Panc1 (cell line): ENCODE measurements at regions of chr5 and their contacts with region 1.

Region 1: DNA sequence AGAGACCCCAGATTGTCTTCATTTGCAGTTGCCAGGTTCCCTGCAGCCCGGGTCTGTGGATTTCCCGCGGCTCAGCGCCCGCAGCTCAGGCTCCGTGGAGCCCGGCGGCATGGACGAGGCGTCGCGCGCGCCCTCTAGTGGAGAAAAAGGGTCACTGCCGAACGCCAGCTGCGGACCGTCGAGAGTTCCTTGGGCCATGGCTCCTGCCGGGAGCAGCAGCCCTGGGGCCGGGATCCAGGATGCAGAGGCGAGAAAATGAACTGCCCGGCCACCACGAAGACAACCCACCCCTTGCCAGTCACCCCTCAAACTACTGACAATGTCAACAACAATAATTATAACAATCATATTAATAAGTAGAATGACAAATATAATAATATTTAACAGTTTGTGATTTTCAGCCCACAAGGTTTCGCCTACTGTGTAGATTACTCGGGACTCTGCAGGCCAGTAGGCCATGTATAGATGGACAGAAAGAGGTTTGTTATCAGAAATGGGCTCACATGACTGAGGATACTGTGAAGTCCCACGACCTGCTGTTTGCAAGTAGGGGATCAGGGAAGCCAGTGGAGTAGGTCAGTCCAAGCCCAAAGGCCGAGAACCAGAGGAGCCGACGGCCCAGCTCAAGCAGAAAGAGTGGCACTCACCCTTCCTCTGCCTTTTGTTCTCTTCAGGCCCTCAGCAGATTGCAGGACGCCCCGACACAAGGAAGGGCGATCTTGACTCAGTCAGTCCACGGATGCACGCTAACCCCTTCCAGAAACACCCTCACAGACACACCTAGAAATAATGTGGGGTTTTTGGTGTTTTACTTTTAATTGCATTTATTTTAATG is 43.1 kb downstream of the BOD1 start:
- DNase-seq: no peak
- ATAC-seq: peak; percentile 97
- H3K4me3 ChIP-seq: peak overlapping the region in 1 of 2 experiments; percentile 51; a peak in 2 of 4 replicates
- H3K27ac ChIP-seq: no peak overlapping the region
- H3K4me1 ChIP-seq: no peaks in the 10 kb centered on the region
- H3K27me3 ChIP-seq: no peaks in the 10 kb centered on the region
- CTCF ChIP-seq: peak; percentile 98

Region 2: DNA sequence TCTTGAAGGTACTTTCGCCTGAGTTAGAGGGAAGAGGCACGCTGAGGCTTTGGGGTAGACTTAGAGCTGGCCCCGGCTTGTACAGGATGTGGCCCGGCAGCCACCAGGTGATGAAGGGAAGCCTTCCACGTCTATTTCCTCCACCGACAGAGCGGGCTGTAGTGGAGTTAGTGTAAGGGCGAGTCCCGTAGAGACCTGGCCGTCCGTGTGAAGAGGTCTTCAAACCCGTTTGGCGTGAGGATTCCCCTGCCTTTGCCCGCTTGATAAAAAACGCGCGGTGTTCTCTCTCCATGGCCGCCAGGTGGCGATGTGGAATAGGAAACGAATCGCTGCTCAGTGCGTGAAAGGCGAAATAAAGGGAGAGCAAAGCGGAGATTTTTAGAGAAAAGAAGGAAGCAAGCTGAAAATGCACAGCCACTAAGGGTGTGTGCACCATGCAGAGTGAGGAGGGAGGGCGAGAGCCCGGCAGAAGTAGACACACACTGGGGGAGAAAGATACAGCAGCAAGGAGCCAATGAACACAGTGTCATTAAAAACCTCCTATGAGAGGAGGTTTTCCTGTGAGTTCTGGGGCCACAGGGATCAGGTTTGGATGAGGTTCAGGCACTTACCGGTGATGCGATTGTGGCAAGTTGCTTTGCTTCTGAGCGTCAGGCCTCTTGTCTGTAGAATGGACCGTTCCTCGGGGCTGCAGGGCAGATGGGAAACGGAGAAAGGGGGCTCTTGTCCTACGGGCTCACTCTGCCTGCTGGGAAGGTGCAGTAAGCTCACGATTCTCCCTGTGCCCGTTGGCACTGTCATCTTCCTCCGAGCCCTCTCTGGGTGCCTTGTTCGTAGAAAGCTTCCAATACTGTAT is 279.3 kb before region 1 on chr5:
- CTCF ChIA-PET with region 1: interaction called, 6 read pairs
- POLR2A ChIA-PET with region 1: no interaction called
- in situ Hi-C with region 1: no loop called
- intact Hi-C with region 1: loop called (anchors 2 kb)
- DNase-seq: no peak
- ATAC-seq: peak; percentile 90
- H3K4me3 ChIP-seq: peak overlapping the region; percentile 11 to 50
- H3K27ac ChIP-seq: no peak overlapping the region
- H3K4me1 ChIP-seq: no peaks in the 10 kb centered on the region; the same call in 1 of the 2 replicates
- H3K27me3 ChIP-seq: no peaks in the 10 kb centered on the region
- CTCF ChIP-seq: peak; percentile 90

Region 3: GRCh38 chr5:173331956-173332479 is 241.3 kb before region 1 on chr5:
- CTCF ChIA-PET with region 1: no interaction called
- POLR2A ChIA-PET with region 1: interaction called, 3 read pairs
- in situ Hi-C with region 1: no loop called
- intact Hi-C with region 1: loop called (anchors 5 kb)
- DNase-seq: no peak
- ATAC-seq: peak; percentile 62
- H3K4me3 ChIP-seq: no peak overlapping the region
- H3K27ac ChIP-seq: peak overlapping the region; percentile 45; the same call in 1 of the 2 replicates
- H3K4me1 ChIP-seq: peaks cover 16% of the 10 kb centered on the region
- H3K27me3 ChIP-seq: no peaks in the 10 kb centered on the region
- CTCF ChIP-seq: peak; percentile 94